Mucosa of descending colon (tissue), 3 donors: ENCODE measurements at regions of chr7 and their contacts with region 1.

Region 1: GRCh38 chr7:74379938-74380337 is 73.8 kb upstream of the GTF2IRD1 start:
- DNase-seq: no peak
- ATAC-seq: no peak
- H3K4me3 ChIP-seq: no peak overlapping the region
- H3K4me1 ChIP-seq: no peaks in the 10 kb centered on the region
- CTCF ChIP-seq: no peak

Region 2: GRCh38 chr7:74289659-74290514 is 90.1 kb before region 1 on chr7:
- intact Hi-C with region 1: loop called in 1 of 2 experiments (anchors 10 kb)
- DNase-seq: peak; percentile 62 to 80 (median 77)
- ATAC-seq: peak; percentile 3
- H3K4me3 ChIP-seq: peak overlapping the region; percentile 75
- H3K4me1 ChIP-seq: peaks cover 79% of the 10 kb centered on the region
- CTCF ChIP-seq: no peak